ENCODE measurements at regions of chr5 and their contacts with region 1.

Region 1: GRCh38 chr5:124735169-124735858 is 11.1 kb downstream of the ZNF608 start:
- DNase-seq: no peak
- H3K4me3 ChIP-seq: peak overlapping the region; percentile 39
- H3K27ac ChIP-seq: peak overlapping the region; percentile 11
- H3K27me3 ChIP-seq: no peaks in the 10 kb centered on the region
- CTCF ChIP-seq: no peak

Region 2: GRCh38 chr5:124651663-124652513 is 83.4 kb before region 1 on chr5:
- CTCF ChIA-PET with region 1: no interaction called
- POLR2A ChIA-PET with region 1: interaction called, 12 read pairs
- DNase-seq: peak; percentile 59
- H3K4me3 ChIP-seq: peak overlapping the region; percentile 68
- H3K27ac ChIP-seq: peak overlapping the region; percentile 78
- H3K27me3 ChIP-seq: no peaks in the 10 kb centered on the region
- CTCF ChIP-seq: no peak

Region 3: GRCh38 chr5:125026896-125027732 is 291.8 kb after region 1 on chr5:
- CTCF ChIA-PET with region 1: no interaction called
- POLR2A ChIA-PET with region 1: no interaction called
- DNase-seq: no peak
- H3K4me3 ChIP-seq: no peak overlapping the region
- H3K27ac ChIP-seq: no peak overlapping the region
- H3K27me3 ChIP-seq: no peaks in the 10 kb centered on the region
- CTCF ChIP-seq: no peak